ENCODE measurements at regions of chr17 and their contacts with region 1.

Region 1: DNA sequence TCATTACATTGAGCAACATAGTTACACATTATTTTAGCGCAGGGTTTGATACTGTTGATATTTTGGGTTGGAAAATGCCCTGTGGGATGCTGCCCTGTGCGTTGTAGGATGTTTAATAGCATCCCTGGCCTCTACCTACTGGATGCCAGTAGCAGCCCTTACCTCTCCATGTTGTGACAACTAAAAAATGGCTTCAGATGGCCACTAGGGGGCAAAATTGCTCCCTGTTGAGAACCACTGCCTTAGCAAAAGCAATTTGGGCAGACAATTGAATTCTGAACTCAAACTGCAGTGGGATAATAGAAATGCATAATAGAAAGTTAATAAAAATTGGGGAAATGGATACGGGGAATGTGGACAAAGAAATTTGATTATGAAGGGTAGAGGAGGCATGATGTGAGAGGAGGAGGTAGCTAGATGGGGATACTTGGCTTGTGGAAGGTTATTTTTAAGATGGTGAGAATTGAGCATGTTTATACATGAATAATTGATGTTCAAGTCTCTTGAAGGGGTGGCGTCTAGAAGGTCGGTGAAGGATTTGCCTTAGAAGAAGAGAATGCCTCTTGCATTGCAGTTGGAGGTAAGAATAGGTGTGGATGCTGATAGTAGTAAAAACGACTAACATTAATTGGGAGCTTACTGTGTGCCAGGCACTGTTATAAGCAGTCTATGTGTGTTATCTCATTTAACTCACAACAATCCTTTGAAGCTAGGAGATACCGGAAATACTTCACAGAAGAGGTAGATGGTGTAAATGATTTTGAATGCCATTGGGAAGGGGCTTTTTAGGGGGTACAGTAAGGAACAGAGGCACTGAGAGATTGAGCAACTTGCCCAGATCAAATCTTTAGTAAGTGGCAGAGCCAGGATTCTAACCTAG is 19.0 kb downstream of the HEATR9 start:
- DNase-seq: peak in 1 of 2 donors; percentile 38
- ATAC-seq: peak in 5 of 8 donors; percentile 49 to 65 (median 58)
- H3K4me3 ChIP-seq: no peak overlapping the region
- H3K27ac ChIP-seq: no peak overlapping the region
- H3K4me1 ChIP-seq: peaks cover 0 to 9% (median 0%) of the 10 kb centered on the region in 9 donors
- H3K27me3 ChIP-seq: no peaks in the 10 kb centered on the region
- CTCF ChIP-seq: peak; percentile 40 to 80 (median 76)

Region 2: DNA sequence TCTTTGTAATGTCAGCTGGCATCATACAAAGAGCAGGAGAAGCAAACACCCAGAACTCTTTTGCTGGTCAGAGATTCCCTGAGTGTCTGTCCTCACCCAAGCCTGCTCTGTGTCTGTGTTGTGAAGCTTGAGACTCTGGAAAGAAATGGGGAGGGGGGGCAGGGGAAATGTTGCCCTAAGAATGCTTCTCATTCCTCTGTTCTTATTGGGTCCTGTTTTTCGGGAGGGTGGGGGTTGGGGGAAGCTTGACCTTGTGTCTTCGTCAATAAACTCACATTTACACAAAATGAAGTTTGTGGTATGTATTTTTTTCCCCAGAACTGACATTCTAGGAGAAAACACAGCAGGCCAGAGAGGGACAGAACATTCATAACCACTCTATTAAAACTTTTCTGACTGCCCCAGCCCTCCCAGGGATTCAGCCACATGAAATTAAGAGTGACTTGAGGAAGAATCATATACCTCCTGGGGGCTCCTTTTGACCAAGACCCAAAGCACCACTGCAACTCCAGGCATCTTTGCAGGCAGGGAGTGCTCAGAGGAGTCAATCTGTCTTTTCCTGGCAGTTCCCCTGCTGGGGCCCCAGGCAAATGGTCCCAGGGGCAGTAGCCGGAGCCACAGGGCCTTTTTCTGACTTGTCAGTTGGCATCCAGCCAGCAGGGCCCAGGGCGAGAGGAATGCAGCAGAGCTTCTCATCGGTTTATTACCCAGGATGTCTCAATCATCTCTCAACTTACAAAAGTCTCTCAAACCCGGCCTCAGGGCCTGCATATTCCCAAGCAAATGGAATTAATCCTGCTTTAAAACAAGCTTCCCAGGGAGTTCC is 123.4 kb before region 1 on chr17:
- intact Hi-C with region 1: no loop called
- DNase-seq: peak; percentile 41 to 67
- ATAC-seq: peak in 7 of 8 donors; percentile 35 to 55 (median 46)
- H3K4me3 ChIP-seq: no peak overlapping the region
- H3K27ac ChIP-seq: peak overlapping the region in 4 of 10 donors; percentile 7 to 45 (median 12)
- H3K4me1 ChIP-seq: peaks cover 12 to 37% (median 23%) of the 10 kb centered on the region in 9 donors
- H3K27me3 ChIP-seq: peaks cover 0 to 5% (median 0%) of the 10 kb centered on the region in 7 donors
- CTCF ChIP-seq: no peak

Region 3: DNA sequence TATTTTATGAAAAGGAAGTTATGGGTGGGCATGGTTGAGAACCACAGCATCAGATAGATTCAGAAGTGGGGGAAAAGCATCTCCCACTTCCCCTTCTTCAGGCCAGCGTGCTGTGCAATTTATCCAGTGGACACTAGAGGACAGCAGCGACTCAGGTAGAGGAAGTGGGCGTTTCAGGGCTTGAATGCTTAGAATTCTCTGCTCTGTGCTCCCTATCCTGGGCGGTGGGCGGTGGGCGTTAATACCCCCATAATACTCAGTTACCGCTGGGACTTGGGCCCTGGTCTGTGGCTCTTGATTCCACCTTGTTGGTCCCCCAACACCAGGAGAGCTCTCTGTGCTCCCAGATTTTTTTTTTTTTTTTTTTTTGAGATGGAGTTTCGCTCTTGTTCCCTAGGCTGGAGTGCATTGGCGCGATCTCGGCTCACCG is 97.5 kb after region 1 on chr17:
- intact Hi-C with region 1: loop called in 1 of 10 experiments (anchors 10 kb)
- DNase-seq: peak; percentile 22 to 32
- ATAC-seq: peak in 5 of 8 donors; percentile 37 to 73 (median 57)
- H3K4me3 ChIP-seq: peak overlapping the region in 5 of 10 donors; percentile 5 to 30 (median 14)
- H3K27ac ChIP-seq: no peak overlapping the region
- H3K4me1 ChIP-seq: peaks cover 0 to 4% (median 0%) of the 10 kb centered on the region in 9 donors
- H3K27me3 ChIP-seq: peaks cover 0 to 18% (median 7%) of the 10 kb centered on the region in 7 donors
- CTCF ChIP-seq: peak; percentile 29 to 82 (median 74)